Mammary epithelial cell (primary cell): ENCODE measurements at regions of chr15 and their contacts with region 1.

Region 1: DNA sequence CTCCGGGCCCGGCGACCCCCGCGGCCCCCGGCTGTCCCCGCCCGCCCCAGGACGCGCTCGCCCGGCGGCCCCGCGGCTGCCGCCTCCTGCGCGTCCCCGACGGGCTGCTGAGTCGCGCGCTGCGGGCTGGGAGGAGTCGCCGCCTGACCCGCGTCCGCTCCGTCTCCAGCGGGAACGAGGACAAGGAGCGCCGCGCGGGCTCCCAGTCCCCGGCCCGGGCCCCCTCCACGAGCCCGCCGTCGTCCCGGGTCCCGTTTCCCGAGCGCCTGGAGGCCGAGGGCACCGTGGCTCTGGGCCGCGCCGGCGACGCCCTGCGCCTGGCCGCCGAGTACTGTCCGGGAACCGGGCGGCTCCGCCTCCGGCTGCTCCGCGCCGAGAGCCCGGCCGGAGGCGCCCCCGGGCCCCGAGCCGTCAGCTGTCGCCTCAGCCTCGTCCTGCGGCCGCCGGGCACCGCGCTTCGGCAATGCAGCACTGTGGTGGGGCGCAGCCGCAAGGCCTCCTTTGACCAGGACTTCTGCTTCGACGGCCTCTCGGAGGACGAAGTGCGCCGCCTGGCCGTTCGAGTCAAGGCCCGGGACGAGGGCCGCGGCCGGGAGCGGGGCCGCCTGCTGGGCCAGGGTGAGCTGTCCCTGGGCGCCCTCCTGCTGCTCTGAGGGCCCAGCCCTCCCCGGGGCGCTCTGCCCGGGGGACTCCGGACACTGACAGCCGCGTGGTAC is 1.5 kb downstream of the C2CD4A start:
- DNase-seq: peak; percentile 21
- H3K4me3 ChIP-seq: peak overlapping the region in 2 of 3 experiments; percentile 31 to 47
- H3K27ac ChIP-seq: no peak overlapping the region
- H3K4me1 ChIP-seq: peaks cover 39% of the 10 kb centered on the region
- H3K27me3 ChIP-seq: peaks cover 4% of the 10 kb centered on the region
- CTCF ChIP-seq: no peak

Region 2: GRCh38 chr15:61857169-61857829 is 210.9 kb before region 1 on chr15:
- CTCF ChIA-PET with region 1: interaction called, 15 read pairs
- dilution Hi-C with region 1: no loop called
- in situ Hi-C with region 1: no loop called
- intact Hi-C with region 1: no loop called
- DNase-seq: no peak
- H3K4me3 ChIP-seq: no peak overlapping the region
- H3K27ac ChIP-seq: no peak overlapping the region
- H3K4me1 ChIP-seq: no peaks in the 10 kb centered on the region
- H3K27me3 ChIP-seq: no peaks in the 10 kb centered on the region
- CTCF ChIP-seq: no peak

Region 3: DNA sequence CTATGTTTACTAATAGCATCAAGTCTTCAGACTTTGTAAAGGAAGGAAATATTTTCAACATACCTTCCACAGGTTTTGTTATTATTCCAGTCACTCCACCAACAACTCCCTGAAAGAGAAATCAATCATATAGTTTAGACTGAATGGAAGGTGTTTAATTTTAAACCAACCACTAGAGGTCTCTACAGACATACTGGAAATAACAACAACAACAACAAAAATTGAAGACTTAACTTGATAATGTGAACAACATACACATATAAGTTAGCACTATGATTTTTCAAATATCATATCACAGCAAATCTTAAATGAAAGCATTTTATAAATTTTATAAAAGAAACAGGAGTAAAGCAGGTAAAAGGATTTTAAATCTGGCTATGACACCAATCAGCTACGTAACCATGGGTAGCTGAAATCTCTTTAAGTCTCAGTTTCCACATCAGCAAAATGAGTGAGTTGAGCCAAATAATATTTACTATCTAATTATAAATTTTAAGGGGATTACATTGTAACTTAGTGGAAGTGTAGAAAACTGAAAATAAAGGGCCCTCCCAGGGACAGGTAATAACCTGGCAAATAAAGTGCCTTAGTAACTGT is 196.2 kb before region 1 on chr15:
- CTCF ChIA-PET with region 1: no interaction called
- dilution Hi-C with region 1: no loop called
- in situ Hi-C with region 1: loop called in 1 of 2 experiments (anchors 10 kb)
- intact Hi-C with region 1: loop called (anchors 1 kb)
- DNase-seq: no peak
- H3K4me3 ChIP-seq: no peak overlapping the region
- H3K27ac ChIP-seq: no peak overlapping the region
- H3K4me1 ChIP-seq: no peaks in the 10 kb centered on the region
- H3K27me3 ChIP-seq: no peaks in the 10 kb centered on the region
- CTCF ChIP-seq: peak; percentile 55 to 57

Region 4: DNA sequence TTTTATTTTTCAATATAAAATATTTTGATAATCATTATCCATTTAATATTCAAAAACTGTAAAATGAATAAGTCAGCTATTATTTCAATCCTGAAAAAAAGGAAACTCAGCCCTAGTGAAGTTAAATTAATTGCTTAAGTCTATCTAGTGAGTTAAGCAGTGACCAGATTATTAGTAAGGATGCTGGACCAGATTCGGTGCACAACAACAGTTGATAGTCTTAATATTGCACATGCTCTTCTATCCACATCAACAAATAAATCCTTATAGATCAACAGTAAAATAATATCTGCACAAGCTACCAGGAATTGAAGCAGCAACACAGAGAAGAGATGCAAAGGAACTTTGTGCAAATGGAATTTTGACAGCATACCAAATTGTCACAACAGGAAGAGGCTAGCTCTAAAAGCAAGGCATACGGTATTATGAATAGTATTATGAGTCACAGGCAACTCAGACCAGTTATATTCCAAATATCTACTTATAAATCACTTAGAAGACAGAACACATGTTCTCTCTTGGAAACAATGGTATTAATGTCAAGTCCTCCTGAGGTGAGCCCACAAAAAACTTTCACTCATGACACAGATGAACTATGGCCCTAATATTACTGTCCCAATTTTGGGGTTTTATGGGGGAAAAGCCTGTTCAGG is 32.8 kb before region 1 on chr15:
- CTCF ChIA-PET with region 1: no interaction called
- dilution Hi-C with region 1: no loop called
- in situ Hi-C with region 1: no loop called
- intact Hi-C with region 1: no loop called
- DNase-seq: peak; percentile 56
- H3K4me3 ChIP-seq: no peak overlapping the region
- H3K27ac ChIP-seq: no peak overlapping the region
- H3K4me1 ChIP-seq: peaks cover 9% of the 10 kb centered on the region
- H3K27me3 ChIP-seq: no peaks in the 10 kb centered on the region
- CTCF ChIP-seq: no peak

Region 5: DNA sequence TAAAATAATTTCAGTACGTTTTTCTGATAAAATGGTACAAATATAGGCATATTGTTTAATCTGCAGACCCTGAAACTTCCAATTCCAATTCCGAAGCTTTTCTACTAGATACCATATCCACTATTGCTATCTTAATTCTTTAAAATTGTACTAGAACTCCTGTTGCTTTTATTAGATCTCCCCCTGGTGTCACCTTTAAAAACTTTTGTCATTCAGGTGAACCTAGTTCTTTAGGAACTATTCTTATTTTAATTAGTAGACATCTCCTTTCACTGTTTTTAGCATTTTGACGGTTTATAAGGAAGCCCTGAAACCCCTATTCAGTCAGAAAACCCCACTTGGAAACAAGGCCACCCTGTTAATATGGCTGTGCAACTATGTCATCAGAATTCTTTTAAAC is 74.5 kb after region 1 on chr15:
- CTCF ChIA-PET with region 1: no interaction called
- dilution Hi-C with region 1: loop called (anchors 5 kb)
- in situ Hi-C with region 1: no loop called
- intact Hi-C with region 1: no loop called
- DNase-seq: no peak
- H3K4me3 ChIP-seq: no peak overlapping the region
- H3K27ac ChIP-seq: no peak overlapping the region
- H3K4me1 ChIP-seq: no peaks in the 10 kb centered on the region
- H3K27me3 ChIP-seq: no peaks in the 10 kb centered on the region
- CTCF ChIP-seq: no peak

Region 6: DNA sequence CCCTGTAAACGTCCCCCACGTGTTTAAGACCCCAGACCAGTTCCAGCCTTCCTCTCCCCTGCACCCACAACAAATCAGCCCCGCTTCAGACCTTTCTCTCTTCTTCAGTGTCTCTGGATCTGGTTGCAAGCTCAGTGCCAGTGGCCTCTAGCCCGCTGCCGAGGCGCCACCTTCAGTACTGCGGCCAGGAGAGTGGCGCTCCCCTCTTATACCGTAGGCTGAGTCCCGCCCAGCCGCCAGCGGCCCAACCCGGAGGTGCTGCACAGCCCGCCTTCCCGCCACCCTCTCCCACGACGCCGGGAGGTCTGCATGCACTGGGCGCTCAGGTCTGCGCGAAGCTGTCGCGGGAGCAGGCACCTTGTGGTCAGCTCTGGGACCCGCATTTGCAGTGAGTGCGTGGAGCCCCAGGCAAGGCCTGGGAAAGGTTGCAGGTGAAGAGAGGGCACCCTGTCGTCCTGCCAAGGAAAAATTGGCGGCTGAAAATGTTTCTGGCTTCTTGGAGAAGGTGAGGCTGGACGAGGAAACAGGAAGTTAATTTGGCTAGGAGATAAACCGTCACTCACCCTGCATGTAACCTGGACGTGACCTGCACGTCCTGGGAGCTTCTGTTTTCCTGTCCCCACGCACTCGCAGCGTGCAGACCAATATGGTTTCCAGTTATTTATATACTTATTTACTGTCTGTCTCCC is 97.0 kb after region 1 on chr15 and contains the start of gene C2CD4B:
- CTCF ChIA-PET with region 1: no interaction called
- dilution Hi-C with region 1: no loop called
- in situ Hi-C with region 1: no loop called
- intact Hi-C with region 1: no loop called
- DNase-seq: peak; percentile 12
- H3K4me3 ChIP-seq: peak within 1 kb of the TSS in 2 of 3 experiments; percentile 18 to 20
- H3K27ac ChIP-seq: no peak within 1 kb of the TSS
- H3K4me1 ChIP-seq: peaks cover 10% of the 10 kb centered on the region
- H3K27me3 ChIP-seq: peaks cover 35% of the 10 kb centered on the region
- CTCF ChIP-seq: no peak
- total RNA-seq, gene C2CD4B: not detected